PC-9 (cell line): ENCODE measurements at regions of chr17 and their contacts with region 1.

Region 1: DNA sequence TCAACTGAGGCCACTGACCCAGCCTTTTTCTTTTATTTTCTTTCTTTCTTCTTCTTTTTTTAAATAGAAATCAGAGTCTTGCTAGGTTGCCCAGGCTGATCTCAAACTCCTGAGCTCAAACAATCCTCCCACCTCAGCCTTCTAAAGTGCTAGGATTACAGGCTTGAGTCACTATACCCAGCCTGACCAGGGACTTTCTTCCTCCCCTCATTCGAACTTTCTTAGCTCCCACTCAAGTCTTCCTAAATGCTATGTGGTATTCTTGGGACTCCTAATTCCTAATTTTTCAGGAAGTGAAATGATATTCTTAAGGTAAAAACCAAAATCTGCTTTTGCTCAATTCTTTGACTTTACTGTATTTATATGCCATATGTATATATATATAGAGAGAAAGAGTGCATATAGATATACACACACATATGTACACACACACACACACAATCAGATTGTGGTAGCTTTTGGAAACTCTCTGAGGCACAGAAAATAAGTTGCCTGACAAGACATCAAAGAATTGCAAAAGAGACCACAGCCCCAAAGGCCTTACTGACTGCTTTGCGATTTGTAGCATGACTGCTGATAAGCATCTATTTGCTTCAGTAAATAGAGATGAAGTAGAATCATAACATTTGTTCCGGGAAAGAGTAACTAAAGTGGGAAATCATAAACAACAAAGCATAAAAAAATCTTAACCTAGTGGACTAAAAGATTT is 9.5 kb upstream of the AMZ2 start:
- DNase-seq: peak in 1 of 2 experiments; percentile 58
- H3K4me3 ChIP-seq: no peak overlapping the region
- H3K27ac ChIP-seq: no peak overlapping the region
- H3K4me1 ChIP-seq: peaks cover 14% of the 10 kb centered on the region; the same call in 1 of the 2 replicates
- H3K27me3 ChIP-seq: no peaks in the 10 kb centered on the region
- CTCF ChIP-seq: no peak

Region 2: GRCh38 chr17:67836205-67836987 is 401.9 kb before region 1 on chr17:
- CTCF ChIA-PET with region 1: no interaction called
- POLR2A ChIA-PET with region 1: interaction called, 12 read pairs
- intact Hi-C with region 1: no loop called
- DNase-seq: no peak
- H3K4me3 ChIP-seq: no peak overlapping the region
- H3K27ac ChIP-seq: no peak overlapping the region
- H3K4me1 ChIP-seq: no peaks in the 10 kb centered on the region
- H3K27me3 ChIP-seq: no peaks in the 10 kb centered on the region
- CTCF ChIP-seq: no peak

Region 3: DNA sequence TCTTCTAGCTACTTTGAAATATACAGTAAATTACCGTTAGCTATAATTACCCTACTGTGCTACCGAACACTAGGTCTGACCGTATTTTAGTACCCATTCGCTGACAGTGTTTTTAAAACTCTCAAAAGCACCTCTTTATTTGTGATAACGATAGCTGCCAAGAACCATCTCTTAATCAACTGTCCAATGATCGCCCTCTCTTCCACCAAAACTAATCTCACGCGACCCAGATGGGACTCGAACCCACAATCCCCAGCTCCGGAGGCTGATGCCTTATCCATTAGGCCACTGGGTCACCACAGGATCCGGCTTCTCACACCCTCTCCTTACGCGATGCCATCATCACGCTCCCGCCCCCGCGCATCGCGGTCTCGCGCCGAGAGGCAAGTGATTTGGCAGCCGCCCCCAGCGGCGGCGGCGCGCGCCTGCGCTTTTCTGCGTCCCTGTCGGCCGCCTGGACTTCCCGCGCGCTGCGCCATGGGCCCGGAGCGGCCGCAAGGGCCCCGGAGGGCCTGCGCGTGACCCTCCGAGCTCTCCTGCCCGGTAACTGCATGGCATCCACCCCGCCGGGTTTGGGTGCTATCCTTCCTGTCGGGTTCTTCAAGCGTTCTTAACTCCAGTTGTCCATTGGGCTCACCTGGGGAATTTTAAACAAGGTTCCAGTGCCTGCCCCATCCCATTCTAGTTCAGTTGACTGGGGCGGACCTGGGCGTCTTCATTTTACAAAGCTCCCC is 218.5 kb before region 1 on chr17:
- CTCF ChIA-PET with region 1: no interaction called
- POLR2A ChIA-PET with region 1: interaction called, 11 read pairs
- intact Hi-C with region 1: no loop called
- DNase-seq: peak; percentile 90 to 98
- H3K4me3 ChIP-seq: peak overlapping the region; percentile 71
- H3K27ac ChIP-seq: 0 out of 2 replicates have a peak overlapping the region, but pooled peaks have one; percentile 14
- H3K4me1 ChIP-seq: peaks cover 13% of the 10 kb centered on the region
- H3K27me3 ChIP-seq: no peaks in the 10 kb centered on the region
- CTCF ChIP-seq: peak; percentile 47; the same call in 1 of the 2 replicates